Activated naive CD4-positive, alpha-beta T cell treated with anti-CD3 and anti-CD28 coated beads, Interleukin-2, amount 10 ng/mL, durations not matched to agents 7 days and 5 days (primary cell): ENCODE measurements at regions of chr5 and their contacts with region 1.

Region 1: DNA sequence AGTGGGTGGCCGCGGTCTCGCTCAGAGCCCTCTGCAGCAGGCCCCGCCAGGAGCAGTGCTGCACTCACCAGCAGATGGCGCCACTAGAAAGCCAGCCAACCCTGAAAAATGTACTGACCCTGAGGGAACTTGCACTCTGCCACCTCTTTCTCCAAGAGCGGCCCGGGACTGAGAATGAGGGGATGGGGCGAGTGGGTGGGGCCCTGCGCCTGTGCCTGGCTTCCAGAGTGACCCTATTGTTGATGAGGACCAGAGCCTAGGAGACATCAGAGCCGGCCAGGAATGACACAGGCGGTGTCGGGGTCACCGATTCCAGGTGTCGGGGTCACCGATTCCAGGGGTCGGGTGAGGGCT is 2.9 kb upstream of the IL17B start:
- DNase-seq: peak; percentile 83
- H3K4me3 Mint-ChIP-seq: no peak overlapping the region
- H3K27ac Mint-ChIP-seq: no peak overlapping the region
- H3K4me1 Mint-ChIP-seq: no peaks in the 10 kb centered on the region
- H3K27me3 Mint-ChIP-seq: peaks cover 11% of the 10 kb centered on the region

Region 2: DNA sequence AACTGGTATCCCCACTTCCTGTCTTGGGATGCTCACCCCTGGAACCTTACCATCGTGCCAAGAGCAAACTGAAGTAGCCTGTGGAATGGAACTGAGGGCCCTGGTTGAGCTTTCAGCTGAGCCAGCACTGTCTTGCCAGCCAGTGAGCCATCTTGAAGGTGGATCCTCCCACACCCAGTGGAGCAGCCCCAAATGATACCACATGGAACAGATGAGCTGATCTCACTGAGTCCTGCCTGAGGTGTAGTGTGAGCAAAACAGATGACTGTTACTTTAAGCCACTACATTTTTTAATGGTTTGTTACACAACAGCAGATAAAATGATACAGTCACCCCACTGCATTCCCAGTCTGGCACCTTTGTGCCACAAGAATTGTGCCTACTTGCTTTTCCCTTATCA is 26.3 kb before region 1 on chr5:
- CTCF ChIA-PET with region 1: no interaction called
- DNase-seq: no peak
- H3K4me3 Mint-ChIP-seq: no peak overlapping the region
- H3K27ac Mint-ChIP-seq: peak overlapping the region; percentile 29
- H3K4me1 Mint-ChIP-seq: peaks cover 87% of the 10 kb centered on the region
- H3K27me3 Mint-ChIP-seq: no peaks in the 10 kb centered on the region

Region 3: GRCh38 chr5:149567226-149567625 is 185.3 kb after region 1 on chr5:
- CTCF ChIA-PET with region 1: interaction called, 60 read pairs
- DNase-seq: no peak
- H3K4me3 Mint-ChIP-seq: no peak overlapping the region
- H3K27ac Mint-ChIP-seq: no peak overlapping the region
- H3K4me1 Mint-ChIP-seq: peaks cover 17% of the 10 kb centered on the region
- H3K27me3 Mint-ChIP-seq: no peaks in the 10 kb centered on the region